GM12878 (cell line): ENCODE measurements at regions of chr9 and their contacts with region 1.

Region 1: DNA sequence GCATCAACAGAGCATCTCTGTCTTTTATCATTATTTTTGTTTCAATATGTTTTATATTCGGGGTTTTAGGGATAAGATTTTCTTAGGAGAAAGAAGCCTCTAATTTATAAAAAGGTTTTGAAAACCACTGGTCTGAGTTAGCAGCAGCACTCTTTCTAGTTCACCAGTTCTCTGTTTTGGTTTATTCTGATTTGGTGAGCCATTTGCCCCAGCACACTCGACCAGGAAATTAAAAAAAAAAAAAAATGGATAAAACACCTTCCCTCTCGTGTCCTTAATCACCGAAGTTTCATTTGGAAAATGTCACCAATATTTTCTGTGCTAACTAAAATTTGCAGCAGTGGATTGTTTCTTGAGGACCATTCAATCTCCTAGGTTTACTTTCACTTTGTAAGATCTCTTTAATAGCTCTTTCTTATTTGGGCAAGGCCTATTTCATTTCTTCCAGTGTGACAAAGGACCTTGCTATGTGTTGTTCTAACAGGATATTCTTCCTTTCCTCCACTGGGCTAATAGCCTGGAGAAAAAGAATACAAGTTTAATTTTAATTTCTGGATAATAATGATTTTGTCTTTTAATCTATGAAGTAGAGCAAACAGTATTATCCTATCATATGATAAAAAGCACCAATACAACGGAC is 57.8 kb upstream of the ANXA1 start:
- DNase-seq: no peak
- ATAC-seq: no peak
- H3K4me3 ChIP-seq: no peak overlapping the region
- H3K27ac ChIP-seq: no peak overlapping the region
- H3K4me1 ChIP-seq: no peaks in the 10 kb centered on the region
- H3K27me3 ChIP-seq: no peaks in the 10 kb centered on the region
- CTCF ChIP-seq: no peak
- EP300 ChIP-seq: no peak
- POLR2A ChIP-seq: no peak
- RAD21 ChIP-seq: no peak

Region 2: GRCh38 chr9:73081979-73082657 is 11.7 kb before region 1 on chr9:
- CTCF ChIA-PET with region 1: interaction called, 11 read pairs
- POLR2A ChIA-PET with region 1: no interaction called
- RAD21 ChIA-PET with region 1: no interaction called
- SMC1A ChIA-PET with region 1: no interaction called
- in situ Hi-C with region 1: no loop called
- intact Hi-C with region 1: no loop called
- DNase-seq: no peak
- ATAC-seq: peak; percentile 69
- H3K4me3 ChIP-seq: no peak overlapping the region
- H3K27ac ChIP-seq: no peak overlapping the region
- H3K4me1 ChIP-seq: no peaks in the 10 kb centered on the region
- H3K27me3 ChIP-seq: no peaks in the 10 kb centered on the region
- CTCF ChIP-seq: peak; percentile 64 to 76 (median 67)
- EP300 ChIP-seq: no peak
- POLR2A ChIP-seq: no peak
- RAD21 ChIP-seq: peak; percentile 75